Activated CD4-positive, alpha-beta T cell treated with anti-CD3 and anti-CD28 coated beads for 36 hours (primary cell): ENCODE measurements at regions of chr1 and their contacts with region 1.

Region 1: DNA sequence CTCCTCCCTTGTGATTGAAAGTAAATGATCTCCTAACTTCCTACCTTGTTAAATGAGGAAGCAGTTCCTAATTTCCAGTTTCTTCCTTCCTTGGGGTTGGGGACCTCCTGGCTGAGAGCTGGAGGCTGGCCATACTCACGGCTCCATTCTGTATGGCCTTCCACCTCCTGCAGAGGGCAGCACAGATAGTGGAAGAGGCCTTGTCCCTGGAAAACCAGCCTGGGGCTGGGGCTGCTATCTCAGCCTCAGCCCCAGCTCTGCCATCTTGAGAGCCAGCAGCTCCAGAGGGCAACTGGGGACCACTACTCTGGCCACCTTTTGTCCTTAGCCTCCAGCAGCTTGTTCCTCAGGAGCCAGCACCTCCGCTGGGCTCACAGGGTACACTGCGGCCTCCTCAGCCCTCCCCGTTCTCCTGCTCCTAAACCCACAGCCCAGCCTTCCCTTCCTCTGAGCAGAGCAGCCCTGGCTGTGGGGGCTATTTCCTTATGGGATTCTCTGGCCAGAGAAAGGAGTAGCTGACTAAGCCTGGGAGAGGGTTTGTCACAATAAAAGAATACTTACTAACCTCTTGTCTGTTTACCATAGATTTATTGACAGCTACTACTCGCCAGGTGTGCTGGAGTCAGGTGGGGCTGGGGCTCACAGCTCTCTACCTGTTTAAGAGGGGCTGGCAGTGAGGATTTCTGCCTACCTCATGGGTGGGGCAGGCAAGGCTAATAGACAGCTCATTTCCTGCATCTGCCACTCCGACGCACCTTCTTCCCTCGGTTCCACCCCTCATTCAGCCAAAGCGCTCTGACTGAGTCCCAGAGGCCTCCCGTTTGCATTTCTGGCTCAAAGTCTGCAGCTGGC is 6.3 kb downstream of the TMEM234 start:
- DNase-seq: peak; percentile 79
- ATAC-seq: peak; percentile 97
- H3K4me3 Mint-ChIP-seq: no peak overlapping the region
- H3K27ac Mint-ChIP-seq: peak overlapping the region; percentile 8
- H3K4me1 Mint-ChIP-seq: peaks cover 15% of the 10 kb centered on the region
- H3K27me3 Mint-ChIP-seq: no peaks in the 10 kb centered on the region

Region 2: GRCh38 chr1:32200226-32201010 is 15.4 kb before region 1 on chr1 and contains the start of gene CCDC28B:
- CTCF ChIA-PET with region 1: interaction called, 16 read pairs
- POLR2A ChIA-PET with region 1: no interaction called
- intact Hi-C with region 1: no loop called
- DNase-seq: peak; percentile 77
- ATAC-seq: peak; percentile 53
- H3K4me3 Mint-ChIP-seq: peak within 1 kb of the TSS; percentile 71
- H3K27ac Mint-ChIP-seq: peak within 1 kb of the TSS; percentile 86
- H3K4me1 Mint-ChIP-seq: peaks cover 57% of the 10 kb centered on the region
- H3K27me3 Mint-ChIP-seq: no peaks in the 10 kb centered on the region
- total RNA-seq, gene CCDC28B: 13.0 to 19.3 TPM

Region 3: DNA sequence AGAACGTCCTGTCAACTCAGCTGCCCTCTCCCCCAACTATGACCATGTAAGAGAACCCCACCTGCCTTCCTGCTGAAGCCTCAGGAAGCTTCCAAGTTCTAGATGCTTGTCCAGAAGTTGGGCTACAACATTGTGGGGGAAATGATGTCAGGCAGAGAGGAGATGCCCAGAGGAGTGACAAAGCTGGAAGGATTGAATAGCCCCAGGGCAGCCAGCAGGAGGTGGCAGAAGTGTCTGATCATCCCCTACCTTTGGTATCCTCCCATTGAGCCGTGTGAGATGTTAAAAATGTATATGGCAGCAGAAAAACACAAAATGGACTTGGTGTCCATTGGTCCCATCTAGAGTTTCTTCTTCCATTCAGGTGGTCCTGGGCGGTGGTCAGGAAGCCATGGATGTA is 12.9 kb after region 1 on chr1:
- CTCF ChIA-PET with region 1: interaction called, 10 read pairs
- POLR2A ChIA-PET with region 1: no interaction called
- intact Hi-C with region 1: no loop called
- DNase-seq: no peak
- ATAC-seq: no peak
- H3K4me3 Mint-ChIP-seq: no peak overlapping the region
- H3K27ac Mint-ChIP-seq: no peak overlapping the region
- H3K4me1 Mint-ChIP-seq: peaks cover 12% of the 10 kb centered on the region
- H3K27me3 Mint-ChIP-seq: no peaks in the 10 kb centered on the region

Region 4: GRCh38 chr1:32240140-32240951 is 24.5 kb after region 1 on chr1:
- CTCF ChIA-PET with region 1: interaction called, 32 read pairs
- POLR2A ChIA-PET with region 1: no interaction called
- intact Hi-C with region 1: no loop called
- DNase-seq: peak; percentile 74
- ATAC-seq: peak; percentile 67
- H3K4me3 Mint-ChIP-seq: peak overlapping the region; percentile 75
- H3K27ac Mint-ChIP-seq: peak overlapping the region; percentile 51
- H3K4me1 Mint-ChIP-seq: peaks cover 19% of the 10 kb centered on the region
- H3K27me3 Mint-ChIP-seq: no peaks in the 10 kb centered on the region